IMR-90 (cell line): ENCODE measurements at regions of chr12 and their contacts with region 1.

Region 1: GRCh38 chr12:91316907-91317269 is 134.3 kb upstream of the DCN start:
- DNase-seq: peak; percentile 69
- ATAC-seq: peak; percentile 84
- H3K4me3 ChIP-seq: no peak overlapping the region
- H3K27ac ChIP-seq: peak overlapping the region; percentile 93; the same call in 1 of the 2 replicates
- H3K4me1 ChIP-seq: peaks cover 8% of the 10 kb centered on the region
- H3K27me3 ChIP-seq: no peaks in the 10 kb centered on the region
- CTCF ChIP-seq: no peak
- POLR2A ChIP-seq: no peak
- RAD21 ChIP-seq: no peak

Region 2: DNA sequence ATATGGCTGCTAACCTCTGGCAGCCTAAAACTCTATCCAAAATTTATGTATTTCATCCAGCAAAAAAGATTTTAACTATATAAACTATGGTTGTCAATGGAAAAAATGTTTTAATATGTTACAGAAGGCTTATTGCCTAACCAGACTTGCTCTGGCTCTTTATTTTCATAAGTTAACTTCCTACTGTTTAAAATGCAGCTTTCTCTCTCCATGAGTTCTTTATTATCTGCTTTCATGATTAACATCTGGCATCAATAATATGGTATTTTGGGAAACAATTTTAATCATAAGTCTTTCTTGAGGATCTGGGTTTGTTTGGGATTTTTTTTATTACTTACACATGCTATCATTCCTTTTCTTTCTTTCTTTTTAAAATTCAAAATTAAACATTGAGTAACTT is 279.6 kb before region 1 on chr12:
- CTCF ChIA-PET with region 1: no interaction called
- POLR2A ChIA-PET with region 1: no interaction called
- dilution Hi-C with region 1: no loop called
- in situ Hi-C with region 1: no loop called
- intact Hi-C with region 1: no loop called
- DNase-seq: peak; percentile 6
- ATAC-seq: no peak
- H3K4me3 ChIP-seq: no peak overlapping the region
- H3K27ac ChIP-seq: no peak overlapping the region
- H3K4me1 ChIP-seq: no peaks in the 10 kb centered on the region
- H3K27me3 ChIP-seq: no peaks in the 10 kb centered on the region
- CTCF ChIP-seq: no peak
- POLR2A ChIP-seq: no peak
- RAD21 ChIP-seq: no peak

Region 3: GRCh38 chr12:91274916-91275315 is 42.0 kb before region 1 on chr12:
- CTCF ChIA-PET with region 1: no interaction called
- POLR2A ChIA-PET with region 1: no interaction called
- dilution Hi-C with region 1: no loop called
- in situ Hi-C with region 1: no loop called
- intact Hi-C with region 1: loop called (anchors 5 kb)
- DNase-seq: peak; percentile 84
- ATAC-seq: peak; percentile 73
- H3K4me3 ChIP-seq: no peak overlapping the region; the same call in 1 of the 2 replicates
- H3K27ac ChIP-seq: peak overlapping the region; percentile 67
- H3K4me1 ChIP-seq: peaks cover 12% of the 10 kb centered on the region
- H3K27me3 ChIP-seq: no peaks in the 10 kb centered on the region
- CTCF ChIP-seq: no peak
- POLR2A ChIP-seq: no peak
- RAD21 ChIP-seq: no peak